ENCODE measurements at regions of chr7 and their contacts with region 1.

Region 1: DNA sequence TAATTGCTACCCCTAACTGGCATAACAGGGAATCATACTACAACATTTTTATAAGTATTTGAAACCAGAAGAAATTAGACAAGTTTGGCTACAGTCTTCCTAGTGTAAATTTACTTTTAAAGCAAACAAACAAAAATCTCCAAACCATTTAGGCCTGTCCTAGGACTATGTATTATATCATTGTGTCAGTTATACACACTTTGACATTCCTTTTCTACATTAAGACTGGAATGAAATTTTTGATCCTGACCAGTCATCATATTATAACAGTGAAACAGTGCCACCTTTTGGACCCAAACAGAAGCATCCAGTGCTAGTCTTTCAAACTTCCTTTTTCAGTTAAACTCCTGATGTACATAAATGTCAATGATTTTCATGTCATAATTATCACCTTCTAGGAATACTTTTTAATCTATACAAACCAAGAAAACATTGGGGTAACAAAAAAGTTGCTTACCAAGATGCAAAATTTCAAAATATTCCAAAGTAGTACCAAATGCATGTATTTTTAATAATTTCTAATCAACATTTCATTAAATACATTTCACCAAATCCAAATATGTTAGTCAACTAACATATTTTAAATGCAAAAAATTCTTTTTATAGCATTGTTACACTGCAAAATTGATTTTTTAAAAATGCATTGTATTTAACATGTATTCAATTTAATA is 75.7 kb downstream of the IMMP2L start:
- DNase-seq: peak; percentile 50
- ATAC-seq: no peak
- H3K4me3 ChIP-seq: no peak overlapping the region
- H3K4me3 Mint-ChIP-seq: no peak overlapping the region
- H3K27ac ChIP-seq: no peak overlapping the region
- H3K27ac Mint-ChIP-seq: no peak overlapping the region
- H3K4me1 ChIP-seq: no peaks in the 10 kb centered on the region
- H3K4me1 Mint-ChIP-seq: no peaks in the 10 kb centered on the region
- H3K27me3 ChIP-seq: no peaks in the 10 kb centered on the region
- H3K27me3 Mint-ChIP-seq: no peaks in the 10 kb centered on the region
- CTCF ChIP-seq: peak; percentile 85

Region 2: GRCh38 chr7:109844362-109844761 is 1642.2 kb before region 1 on chr7:
- CTCF ChIA-PET with region 1: no interaction called
- POLR2A ChIA-PET with region 1: no interaction called
- intact Hi-C with region 1: loop called (anchors 10 kb)
- DNase-seq: no peak
- ATAC-seq: no peak
- H3K4me3 ChIP-seq: no peak overlapping the region
- H3K4me3 Mint-ChIP-seq: no peak overlapping the region
- H3K27ac ChIP-seq: no peak overlapping the region
- H3K27ac Mint-ChIP-seq: no peak overlapping the region
- H3K4me1 ChIP-seq: no peaks in the 10 kb centered on the region
- H3K4me1 Mint-ChIP-seq: no peaks in the 10 kb centered on the region
- H3K27me3 ChIP-seq: no peaks in the 10 kb centered on the region
- H3K27me3 Mint-ChIP-seq: no peaks in the 10 kb centered on the region
- CTCF ChIP-seq: no peak

Region 3: DNA sequence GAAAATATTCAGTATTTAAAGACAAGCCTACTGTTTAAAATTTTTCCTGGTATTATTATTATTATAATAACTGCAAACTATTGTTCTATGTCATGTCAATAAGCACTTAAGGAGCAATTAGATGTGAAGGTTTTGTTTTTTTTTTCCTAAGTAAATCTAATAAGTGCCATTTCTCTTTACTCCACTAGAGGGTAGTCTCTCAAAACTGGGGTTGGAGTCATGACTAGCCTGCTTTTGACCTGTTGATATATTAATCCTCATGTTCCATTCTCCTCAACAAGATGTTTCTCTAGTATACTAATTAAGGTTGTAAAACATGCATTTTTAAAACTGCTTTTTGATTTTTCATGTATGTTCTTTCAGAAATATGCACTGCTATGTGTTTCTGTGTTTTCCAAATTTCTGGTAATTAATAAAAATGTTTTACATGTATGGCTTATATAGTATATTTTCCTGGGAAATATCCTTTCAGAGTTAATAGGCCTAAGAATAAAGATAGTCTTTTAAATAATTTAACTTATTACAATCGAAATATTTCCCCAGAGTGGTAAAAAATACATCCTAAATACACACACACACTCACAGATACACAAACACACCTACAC is 396.7 kb before region 1 on chr7:
- CTCF ChIA-PET with region 1: interaction called, 3 read pairs
- POLR2A ChIA-PET with region 1: no interaction called
- intact Hi-C with region 1: loop called (anchors 1 kb)
- DNase-seq: peak; percentile 55
- ATAC-seq: peak; percentile 53
- H3K4me3 ChIP-seq: no peak overlapping the region
- H3K4me3 Mint-ChIP-seq: no peak overlapping the region
- H3K27ac ChIP-seq: no peak overlapping the region
- H3K27ac Mint-ChIP-seq: no peak overlapping the region
- H3K4me1 ChIP-seq: no peaks in the 10 kb centered on the region
- H3K4me1 Mint-ChIP-seq: peaks cover 6% of the 10 kb centered on the region
- H3K27me3 ChIP-seq: no peaks in the 10 kb centered on the region
- H3K27me3 Mint-ChIP-seq: no peaks in the 10 kb centered on the region
- CTCF ChIP-seq: peak; percentile 84

Region 4: DNA sequence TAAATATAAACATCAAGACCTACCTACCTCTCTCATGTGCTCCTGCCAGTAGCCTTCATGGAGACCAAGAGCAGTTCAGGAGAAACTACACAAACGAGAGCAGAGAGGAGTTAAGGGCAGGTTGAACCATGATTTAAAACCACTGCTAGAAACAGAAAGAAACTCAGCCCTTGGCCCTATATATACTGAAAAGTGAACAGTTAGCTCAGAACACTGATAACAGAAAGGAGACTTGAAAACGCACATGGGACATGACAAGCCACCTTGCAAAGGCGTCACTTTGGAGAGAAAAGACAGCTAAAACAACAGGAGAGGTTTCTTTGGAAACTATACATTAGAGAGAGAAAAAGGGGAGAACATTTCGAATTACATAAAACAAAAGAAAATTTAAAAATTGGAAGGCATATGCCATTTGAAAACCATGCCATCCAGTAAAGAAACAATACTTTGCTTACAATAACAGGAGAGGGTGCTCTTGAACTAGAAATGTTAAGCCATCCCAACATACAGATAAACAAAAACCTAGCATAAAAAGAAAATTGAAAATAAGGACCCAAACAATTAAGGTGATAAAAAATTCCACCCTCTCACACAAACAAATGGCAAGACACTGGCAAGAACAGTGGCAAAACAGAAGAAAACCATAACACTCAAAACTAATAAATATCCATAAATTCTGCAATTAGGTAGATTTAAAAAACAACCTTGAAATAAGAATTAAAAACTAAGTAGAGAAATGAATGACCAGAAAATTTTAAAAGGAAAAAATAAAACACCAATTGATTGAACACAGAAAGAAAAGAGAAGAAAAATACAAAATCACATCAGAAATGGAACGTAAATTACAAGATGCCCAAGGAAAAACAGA is 157.0 kb before region 1 on chr7:
- CTCF ChIA-PET with region 1: no interaction called
- POLR2A ChIA-PET with region 1: no interaction called
- intact Hi-C with region 1: loop called (anchors 10 kb)
- DNase-seq: no peak
- ATAC-seq: no peak
- H3K4me3 ChIP-seq: no peak overlapping the region
- H3K4me3 Mint-ChIP-seq: no peak overlapping the region
- H3K27ac ChIP-seq: no peak overlapping the region
- H3K27ac Mint-ChIP-seq: no peak overlapping the region
- H3K4me1 ChIP-seq: no peaks in the 10 kb centered on the region
- H3K4me1 Mint-ChIP-seq: peaks cover 11% of the 10 kb centered on the region
- H3K27me3 ChIP-seq: no peaks in the 10 kb centered on the region
- H3K27me3 Mint-ChIP-seq: no peaks in the 10 kb centered on the region
- CTCF ChIP-seq: no peak

Region 5: GRCh38 chr7:111424768-111425167 is 61.8 kb before region 1 on chr7:
- CTCF ChIA-PET with region 1: no interaction called
- POLR2A ChIA-PET with region 1: no interaction called
- intact Hi-C with region 1: no loop called
- DNase-seq: no peak
- ATAC-seq: no peak
- H3K4me3 ChIP-seq: no peak overlapping the region
- H3K4me3 Mint-ChIP-seq: no peak overlapping the region
- H3K27ac ChIP-seq: no peak overlapping the region
- H3K27ac Mint-ChIP-seq: no peak overlapping the region
- H3K4me1 ChIP-seq: no peaks in the 10 kb centered on the region
- H3K4me1 Mint-ChIP-seq: no peaks in the 10 kb centered on the region
- H3K27me3 ChIP-seq: no peaks in the 10 kb centered on the region
- H3K27me3 Mint-ChIP-seq: no peaks in the 10 kb centered on the region
- CTCF ChIP-seq: no peak

Measured in B cell (primary cell).